ENCODE measurements at regions of chr19 and their contacts with region 1.

Region 1: GRCh38 chr19:43934985-43935708 is at the start of gene ZNF45:
- DNase-seq: peak; percentile 26
- H3K4me3 ChIP-seq: peak within 1 kb of the TSS; percentile 84
- CTCF ChIP-seq: no peak

Region 2: DNA sequence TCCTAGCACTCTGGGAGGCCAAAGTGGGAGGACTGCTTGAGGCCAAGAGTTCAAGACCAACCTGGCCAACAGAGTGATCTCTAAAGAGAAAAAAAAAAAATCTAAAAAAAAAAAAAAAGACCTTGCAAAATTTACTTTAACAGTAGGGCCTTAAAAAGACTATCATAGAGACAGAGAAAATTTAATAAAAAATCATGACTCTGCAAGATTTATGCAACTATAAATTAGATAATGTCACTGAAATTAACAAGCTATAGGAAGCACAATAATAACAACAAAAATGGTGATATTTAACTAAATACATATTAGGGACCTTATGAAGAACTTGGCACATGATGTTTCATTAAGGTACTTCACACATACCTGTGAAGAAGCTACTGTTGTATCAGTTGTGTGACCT is 11.3 kb before region 1 on chr19:
- CTCF ChIA-PET with region 1: no interaction called
- POLR2A ChIA-PET with region 1: no interaction called
- DNase-seq: no peak
- H3K4me3 ChIP-seq: no peak overlapping the region
- CTCF ChIP-seq: no peak

Region 3: GRCh38 chr19:43950834-43951645 is 15.9 kb after region 1 on chr19 and contains the start of gene ZNF221:
- CTCF ChIA-PET with region 1: interaction called, 7 read pairs
- POLR2A ChIA-PET with region 1: interaction called, 13 read pairs
- DNase-seq: peak; percentile 95
- H3K4me3 ChIP-seq: peak within 1 kb of the TSS; percentile 90
- CTCF ChIP-seq: peak; percentile 52

Measured in AG04449 (cell line).